ENCODE measurements at regions of chr19 and their contacts with region 1.

Region 1: GRCh38 chr19:19865739-19866481 is at the start of gene ZNF253:
- DNase-seq: peak; percentile 76 to 95 (median 92)
- ATAC-seq: peak; percentile 95
- H3K4me3 ChIP-seq: peak within 1 kb of the TSS; percentile 93
- H3K4me3 Mint-ChIP-seq: peak within 1 kb of the TSS; percentile 98 to 100 (median 100)
- H3K27ac ChIP-seq: peak within 1 kb of the TSS; percentile 86
- H3K27ac Mint-ChIP-seq: peak within 1 kb of the TSS; percentile 96 to 100 (median 99)
- H3K4me1 ChIP-seq: peaks cover 7 to 13% of the 10 kb centered on the region in 2 donors
- H3K4me1 Mint-ChIP-seq: peaks cover 21 to 41% (median 31%) of the 10 kb centered on the region in 7 donors
- H3K27me3 ChIP-seq: no peaks in the 10 kb centered on the region
- H3K27me3 Mint-ChIP-seq: no peaks in the 10 kb centered on the region
- total RNA-seq, gene ZNF253: 9.5 to 33.8 (median 14.8) TPM

Region 2: DNA sequence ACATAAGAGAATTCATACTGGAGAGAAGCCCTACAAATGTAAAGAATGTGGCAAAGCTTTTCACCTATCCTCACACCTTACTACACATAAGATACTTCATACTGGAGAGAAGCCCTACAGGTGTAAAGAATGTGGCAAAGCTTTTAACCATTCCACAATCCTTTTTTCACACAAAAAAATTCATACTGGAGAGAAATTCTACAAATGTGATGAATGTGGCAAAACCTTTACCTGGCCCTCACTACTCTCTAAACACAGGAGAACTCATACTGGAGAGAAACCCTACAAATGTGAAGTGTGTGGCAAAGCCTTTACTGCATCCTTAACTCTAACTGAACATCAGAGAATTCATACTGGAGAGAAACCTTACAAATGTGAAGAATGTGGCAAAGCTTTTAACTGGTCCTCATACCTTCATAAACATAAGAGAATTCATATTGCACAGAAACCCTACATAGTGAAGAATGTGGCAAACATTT is 30.3 kb before region 1 on chr19:
- CTCF ChIA-PET with region 1: no interaction called
- POLR2A ChIA-PET with region 1: interaction called, 12 read pairs
- intact Hi-C with region 1: no loop called
- DNase-seq: no peak
- ATAC-seq: no peak
- H3K4me3 ChIP-seq: no peak overlapping the region
- H3K4me3 Mint-ChIP-seq: no peak overlapping the region
- H3K27ac ChIP-seq: no peak overlapping the region
- H3K27ac Mint-ChIP-seq: no peak overlapping the region
- H3K4me1 ChIP-seq: no peaks in the 10 kb centered on the region
- H3K4me1 Mint-ChIP-seq: no peaks in the 10 kb centered on the region
- H3K27me3 ChIP-seq: no peaks in the 10 kb centered on the region
- H3K27me3 Mint-ChIP-seq: no peaks in the 10 kb centered on the region

Region 3: DNA sequence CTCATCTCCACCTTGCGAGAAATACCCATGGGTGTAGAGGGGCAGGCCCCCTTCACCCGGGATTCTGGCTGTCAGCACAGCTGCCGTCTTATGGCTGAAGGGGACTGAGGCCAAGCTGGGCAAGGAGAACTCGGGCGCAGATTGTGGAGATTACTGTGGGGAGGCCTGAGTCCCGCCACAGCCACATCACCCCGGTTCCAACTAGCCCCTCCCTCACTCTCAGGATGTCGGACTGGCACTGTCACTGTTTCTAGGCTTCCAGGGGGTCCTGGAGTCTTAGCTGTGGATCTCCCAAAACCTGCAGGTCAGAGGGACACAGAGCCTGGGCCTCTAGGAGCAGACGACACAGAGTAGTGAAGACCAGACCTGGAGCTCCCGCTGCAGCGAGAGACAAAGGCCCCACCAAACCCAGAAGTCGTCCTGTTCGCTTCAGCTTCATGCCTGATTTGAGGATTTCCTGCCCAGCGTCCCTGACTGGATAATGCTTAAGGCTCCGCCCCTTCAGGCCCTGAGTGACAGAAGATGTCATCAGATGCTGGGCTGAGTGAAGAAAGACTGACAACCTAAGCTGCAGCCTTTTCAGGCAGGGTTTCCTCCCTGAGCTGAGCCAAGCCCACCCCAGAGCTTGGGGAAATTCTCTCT is 90.6 kb after region 1 on chr19:
- CTCF ChIA-PET with region 1: no interaction called
- POLR2A ChIA-PET with region 1: no interaction called
- intact Hi-C with region 1: loop called in 1 of 2 experiments (anchors 2 kb)
- DNase-seq: no peak
- ATAC-seq: no peak
- H3K4me3 ChIP-seq: no peak overlapping the region
- H3K4me3 Mint-ChIP-seq: no peak overlapping the region
- H3K27ac ChIP-seq: no peak overlapping the region
- H3K27ac Mint-ChIP-seq: no peak overlapping the region
- H3K4me1 ChIP-seq: no peaks in the 10 kb centered on the region
- H3K4me1 Mint-ChIP-seq: peaks cover 0 to 8% (median 5%) of the 10 kb centered on the region in 7 donors
- H3K27me3 ChIP-seq: no peaks in the 10 kb centered on the region
- H3K27me3 Mint-ChIP-seq: no peaks in the 10 kb centered on the region